ENCODE measurements at regions of chr17 and their contacts with region 1.

Region 1: DNA sequence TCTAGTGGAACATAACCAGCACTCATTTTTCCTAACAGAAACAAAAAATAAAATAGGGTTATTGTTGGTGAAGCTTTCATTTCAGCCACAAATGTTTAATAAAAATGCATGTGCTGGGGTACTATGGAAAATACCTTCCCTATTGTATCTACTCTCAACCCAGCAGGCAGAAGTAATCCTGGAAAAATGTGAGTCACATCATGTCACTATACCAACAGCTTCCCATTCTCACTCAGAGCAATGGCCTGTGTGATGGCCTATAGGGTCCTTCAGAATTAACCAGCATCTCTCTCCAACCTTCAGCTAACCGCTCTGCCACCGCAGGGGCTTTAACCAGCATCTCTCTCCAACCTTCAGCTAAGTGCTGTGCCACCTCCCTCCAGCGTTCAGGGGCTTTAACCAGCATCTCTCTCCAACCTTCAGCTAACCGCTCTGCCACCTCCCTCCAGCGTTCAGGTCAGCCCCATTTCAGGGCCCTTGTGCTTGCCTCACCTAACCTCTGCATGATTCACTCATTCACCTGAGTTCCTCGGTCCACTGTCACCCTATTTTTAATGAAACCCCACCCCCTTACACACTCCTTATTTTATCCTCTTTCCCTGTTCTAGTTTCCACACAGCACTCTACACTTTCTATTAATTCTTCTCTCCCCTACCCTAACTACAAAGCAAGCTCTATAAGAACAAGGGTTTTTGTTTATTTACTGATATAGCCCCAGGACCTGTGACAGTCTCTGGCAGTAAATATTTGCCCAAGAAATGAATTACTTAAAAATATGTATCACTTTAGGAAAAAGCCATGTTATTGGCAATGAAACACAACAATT is 34.0 kb downstream of the UBE2G1 start:
- DNase-seq: no peak
- ATAC-seq: peak; percentile 88
- H3K4me3 ChIP-seq: no peak overlapping the region
- H3K27ac ChIP-seq: peak overlapping the region; percentile 57; the same call in 1 of the 2 replicates
- H3K4me1 ChIP-seq: peaks cover 45% of the 10 kb centered on the region
- H3K27me3 ChIP-seq: no peaks in the 10 kb centered on the region
- CTCF ChIP-seq: no peak

Region 2: DNA sequence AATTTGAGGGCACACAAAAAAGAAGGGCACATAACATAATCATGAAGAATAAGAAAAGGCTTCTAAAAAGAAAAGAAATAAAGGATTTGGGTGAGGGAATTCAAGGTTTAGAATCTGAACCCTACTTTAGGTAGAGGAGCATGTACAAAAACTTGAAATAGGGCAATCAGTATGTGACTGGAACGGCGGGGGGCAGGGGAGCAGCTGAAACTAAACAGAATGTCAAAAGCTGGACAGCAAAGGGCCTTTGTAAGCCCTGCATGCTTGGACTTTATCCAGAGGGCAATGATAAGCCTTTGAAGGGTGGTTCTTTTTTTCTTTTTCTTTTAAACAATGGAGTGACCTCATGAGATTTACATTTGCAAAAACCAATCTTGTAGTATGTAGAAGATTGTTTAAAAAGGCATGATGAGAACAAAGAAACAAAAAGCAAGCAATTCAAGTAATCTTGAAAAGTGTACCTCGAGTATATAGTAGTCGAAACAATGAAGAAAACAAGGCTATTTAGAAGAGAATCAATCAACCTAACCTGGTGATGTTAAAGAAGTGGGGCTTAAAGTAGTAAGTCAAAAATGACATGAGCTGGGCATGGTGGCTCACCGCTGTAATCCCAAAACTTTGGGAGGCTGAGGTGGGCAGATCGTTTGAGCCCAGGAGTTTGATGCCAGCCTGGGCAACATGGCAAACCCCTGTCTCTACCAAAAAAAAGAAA is 22.0 kb before region 1 on chr17:
- CTCF ChIA-PET with region 1: no interaction called
- POLR2A ChIA-PET with region 1: interaction called, 10 read pairs
- in situ Hi-C with region 1: no loop called
- intact Hi-C with region 1: no loop called
- DNase-seq: no peak
- ATAC-seq: no peak
- H3K4me3 ChIP-seq: no peak overlapping the region
- H3K27ac ChIP-seq: no peak overlapping the region
- H3K4me1 ChIP-seq: peaks cover 33% of the 10 kb centered on the region
- H3K27me3 ChIP-seq: no peaks in the 10 kb centered on the region
- CTCF ChIP-seq: no peak

Measured in Panc1 (cell line).